Common myeloid progenitor, CD34-positive (primary cell): ENCODE measurements at regions of chr14 and their contacts with region 1.

Region 1: DNA sequence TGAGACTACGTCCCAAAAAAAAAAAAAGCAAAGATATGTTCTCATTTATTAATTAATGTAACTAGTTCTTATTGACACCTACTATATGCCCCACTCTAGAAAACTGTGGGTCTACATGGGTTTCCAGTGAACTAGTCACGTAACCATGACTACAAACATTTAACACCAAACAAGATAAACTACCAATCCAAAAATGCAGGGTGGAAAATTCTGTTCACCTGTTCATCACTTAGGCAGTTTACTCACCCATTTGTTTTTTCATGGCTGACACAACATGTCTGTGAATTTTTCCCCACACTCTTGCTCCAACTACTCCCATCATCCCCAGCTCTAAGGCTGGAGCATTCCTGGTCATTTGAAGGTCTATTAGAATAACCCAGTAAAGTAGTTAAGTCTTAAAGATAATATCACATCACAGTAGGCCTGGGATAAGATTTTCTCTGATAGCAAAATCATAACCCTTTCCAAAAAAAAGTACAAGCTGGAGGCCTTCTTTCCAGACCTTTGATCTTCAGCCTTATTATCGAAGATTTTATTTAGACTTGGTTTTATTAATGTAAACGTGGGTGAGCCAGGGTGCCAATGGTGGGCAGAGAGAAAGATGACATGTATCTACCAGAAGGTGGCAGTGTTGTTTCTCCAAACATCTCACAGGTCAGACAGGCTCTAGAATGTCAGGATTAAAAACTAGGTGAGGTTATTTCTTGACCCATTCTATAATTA is 61.6 kb upstream of the DAAM1 start:
- DNase-seq: peak; percentile 53 to 72 (median 70)
- H3K4me3 ChIP-seq: no peak overlapping the region
- H3K27ac ChIP-seq: no peak overlapping the region
- H3K4me1 ChIP-seq: peaks cover 0 to 6% (median 0%) of the 10 kb centered on the region in 4 experiments
- H3K27me3 ChIP-seq: no peaks in the 10 kb centered on the region

Region 2: GRCh38 chr14:59085207-59085739 is 41.6 kb before region 1 on chr14:
- CTCF ChIA-PET with region 1: no interaction called
- POLR2A ChIA-PET with region 1: no interaction called
- DNase-seq: no peak
- H3K4me3 ChIP-seq: no peak overlapping the region
- H3K27ac ChIP-seq: no peak overlapping the region
- H3K4me1 ChIP-seq: no peaks in the 10 kb centered on the region
- H3K27me3 ChIP-seq: no peaks in the 10 kb centered on the region

Region 3: GRCh38 chr14:59103396-59103795 is 23.5 kb before region 1 on chr14:
- CTCF ChIA-PET with region 1: no interaction called
- POLR2A ChIA-PET with region 1: no interaction called
- DNase-seq: no peak
- H3K4me3 ChIP-seq: no peak overlapping the region
- H3K27ac ChIP-seq: no peak overlapping the region
- H3K4me1 ChIP-seq: no peaks in the 10 kb centered on the region
- H3K27me3 ChIP-seq: no peaks in the 10 kb centered on the region

Region 4: GRCh38 chr14:59137256-59137655 is 10.4 kb after region 1 on chr14:
- CTCF ChIA-PET with region 1: interaction called, 15 read pairs
- POLR2A ChIA-PET with region 1: no interaction called
- DNase-seq: no peak
- H3K4me3 ChIP-seq: no peak overlapping the region
- H3K27ac ChIP-seq: no peak overlapping the region
- H3K4me1 ChIP-seq: no peaks in the 10 kb centered on the region
- H3K27me3 ChIP-seq: no peaks in the 10 kb centered on the region

Region 5: GRCh38 chr14:59428581-59429012 is 301.7 kb after region 1 on chr14:
- CTCF ChIA-PET with region 1: interaction called, 12 read pairs
- POLR2A ChIA-PET with region 1: no interaction called
- DNase-seq: peak in 1 of 3 donors; percentile 9
- H3K4me3 ChIP-seq: no peak overlapping the region
- H3K27ac ChIP-seq: no peak overlapping the region
- H3K4me1 ChIP-seq: peaks cover 0 to 20% (median 4%) of the 10 kb centered on the region in 4 experiments
- H3K27me3 ChIP-seq: no peaks in the 10 kb centered on the region

Region 6: GRCh38 chr14:59438195-59438647 is 311.4 kb after region 1 on chr14:
- CTCF ChIA-PET with region 1: interaction called, 49 read pairs
- POLR2A ChIA-PET with region 1: no interaction called
- DNase-seq: peak in 2 of 3 donors; percentile 10 to 21
- H3K4me3 ChIP-seq: no peak overlapping the region
- H3K27ac ChIP-seq: no peak overlapping the region
- H3K4me1 ChIP-seq: peaks cover 0 to 11% (median 0%) of the 10 kb centered on the region in 4 experiments
- H3K27me3 ChIP-seq: no peaks in the 10 kb centered on the region

Region 7: GRCh38 chr14:59560314-59560713 is 433.4 kb after region 1 on chr14:
- CTCF ChIA-PET with region 1: no interaction called
- POLR2A ChIA-PET with region 1: no interaction called
- DNase-seq: no peak
- H3K4me3 ChIP-seq: no peak overlapping the region
- H3K27ac ChIP-seq: no peak overlapping the region
- H3K4me1 ChIP-seq: peaks cover 18 to 51% (median 23%) of the 10 kb centered on the region in 4 experiments
- H3K27me3 ChIP-seq: no peaks in the 10 kb centered on the region